Ascending aorta (tissue), 2 donors: ENCODE measurements at regions of chr9 and their contacts with region 1.

Region 1: GRCh38 chr9:12133416-12133815 is 559.8 kb upstream of the TYRP1 start:
- DNase-seq: no peak
- H3K4me3 ChIP-seq: no peak overlapping the region
- H3K27ac ChIP-seq: no peak overlapping the region
- H3K4me1 ChIP-seq: no peaks in the 10 kb centered on the region
- H3K27me3 ChIP-seq: no peaks in the 10 kb centered on the region
- CTCF ChIP-seq: no peak

Region 2: GRCh38 chr9:12065050-12065449 is 68.4 kb before region 1 on chr9:
- intact Hi-C with region 1: loop called (anchors 10 kb)
- DNase-seq: no peak
- H3K4me3 ChIP-seq: no peak overlapping the region
- H3K27ac ChIP-seq: no peak overlapping the region
- H3K4me1 ChIP-seq: no peaks in the 10 kb centered on the region
- H3K27me3 ChIP-seq: no peaks in the 10 kb centered on the region
- CTCF ChIP-seq: no peak

Region 3: DNA sequence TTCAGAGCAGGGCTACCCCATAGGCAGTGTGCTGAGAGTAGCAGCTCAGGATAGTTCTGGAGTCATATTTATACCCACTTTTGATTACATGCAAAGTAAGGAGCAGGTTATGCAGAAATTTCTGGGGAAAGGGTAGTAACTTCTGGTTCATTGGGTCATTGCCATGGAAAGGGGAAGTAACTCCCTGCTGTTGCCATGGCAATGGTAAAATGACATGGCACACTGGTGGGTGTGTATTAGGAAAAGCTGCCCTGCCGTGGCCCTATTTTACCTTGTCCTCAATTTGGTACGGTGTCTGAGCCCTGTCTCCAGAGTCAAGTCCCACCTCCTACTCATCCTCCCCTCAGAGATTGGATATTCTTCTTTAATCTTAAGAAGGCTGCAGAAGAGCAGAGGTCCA is 33.1 kb after region 1 on chr9:
- intact Hi-C with region 1: no loop called
- DNase-seq: no peak
- H3K4me3 ChIP-seq: no peak overlapping the region
- H3K27ac ChIP-seq: no peak overlapping the region
- H3K4me1 ChIP-seq: no peaks in the 10 kb centered on the region
- H3K27me3 ChIP-seq: no peaks in the 10 kb centered on the region
- CTCF ChIP-seq: no peak